T-cell (primary cell): ENCODE measurements at regions of chr2 and their contacts with region 1.

Region 1: DNA sequence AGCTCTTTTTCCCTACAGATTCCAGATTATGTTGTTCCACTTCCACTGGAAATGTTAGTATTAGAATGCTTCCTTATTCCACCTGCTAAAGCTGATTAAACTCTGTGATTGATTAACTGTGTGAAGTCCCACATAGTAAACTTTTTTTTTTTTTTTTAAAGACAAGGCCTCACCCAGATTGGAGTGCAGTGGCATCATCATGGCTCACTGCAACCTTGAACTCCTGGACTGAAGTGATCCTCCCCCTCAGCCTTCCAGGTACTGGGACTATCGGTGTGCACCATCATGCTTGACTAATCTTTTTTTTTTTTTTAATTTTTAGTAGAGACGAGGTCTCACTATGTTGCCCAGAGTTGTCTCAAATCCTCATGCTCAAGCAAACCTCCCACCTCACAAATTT is 108.5 kb upstream of the RBMS1 start:
- DNase-seq: no peak
- ATAC-seq: no peak
- H3K4me3 ChIP-seq: no peak overlapping the region
- H3K4me3 Mint-ChIP-seq: no peak overlapping the region
- H3K27ac ChIP-seq: no peak overlapping the region
- H3K27ac Mint-ChIP-seq: no peak overlapping the region
- H3K4me1 ChIP-seq: no peaks in the 10 kb centered on the region
- H3K4me1 Mint-ChIP-seq: peaks cover 0 to 6% (median 0%) of the 10 kb centered on the region in 3 donors
- H3K27me3 ChIP-seq: no peaks in the 10 kb centered on the region
- H3K27me3 Mint-ChIP-seq: peaks cover 0 to 2% of the 10 kb centered on the region in 2 donors

Region 2: DNA sequence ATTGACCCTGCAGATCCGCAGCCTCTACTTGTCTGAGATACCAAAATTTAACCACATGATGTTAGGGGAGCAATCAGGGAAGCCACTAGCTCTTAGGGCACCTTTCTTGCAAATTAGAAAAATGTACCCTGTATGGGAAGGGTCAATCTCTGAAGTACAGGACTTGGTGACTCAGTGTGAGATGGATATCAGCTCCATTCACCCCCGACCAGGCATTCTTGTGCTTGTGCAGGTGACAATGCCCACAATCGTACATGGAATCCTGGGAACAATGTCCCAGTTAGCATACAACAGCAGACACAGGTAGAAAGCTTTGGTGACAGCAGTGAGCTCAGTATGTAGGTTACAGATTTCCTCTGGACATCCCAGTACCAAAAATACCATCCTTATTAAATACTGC is 264.3 kb before region 1 on chr2:
- CTCF ChIA-PET with region 1: no interaction called
- POLR2A ChIA-PET with region 1: interaction called in 1 of 2 experiments, 11 read pairs
- DNase-seq: no peak
- ATAC-seq: no peak
- H3K4me3 ChIP-seq: no peak overlapping the region
- H3K4me3 Mint-ChIP-seq: no peak overlapping the region
- H3K27ac ChIP-seq: no peak overlapping the region
- H3K27ac Mint-ChIP-seq: peak overlapping the region; percentile 26 to 53
- H3K4me1 ChIP-seq: peaks cover 25 to 27% of the 10 kb centered on the region in 2 experiments
- H3K4me1 Mint-ChIP-seq: peaks cover 83 to 88% (median 85%) of the 10 kb centered on the region in 3 donors
- H3K27me3 ChIP-seq: no peaks in the 10 kb centered on the region
- H3K27me3 Mint-ChIP-seq: no peaks in the 10 kb centered on the region